ENCODE measurements at regions of chrX and their contacts with region 1.

Region 1: GRCh38 chrX:10636337-10636736 is 16.0 kb upstream of the MID1 start:
- DNase-seq: no peak
- ATAC-seq: peak; percentile 55; the same call in 1 of the 2 replicates
- H3K4me3 ChIP-seq: no peak overlapping the region
- H3K27ac ChIP-seq: peak overlapping the region; percentile 72
- H3K4me1 ChIP-seq: no peaks in the 10 kb centered on the region; the same call in 1 of the 2 replicates
- H3K27me3 ChIP-seq: no peaks in the 10 kb centered on the region
- CTCF ChIP-seq: peak; percentile 81

Region 2: DNA sequence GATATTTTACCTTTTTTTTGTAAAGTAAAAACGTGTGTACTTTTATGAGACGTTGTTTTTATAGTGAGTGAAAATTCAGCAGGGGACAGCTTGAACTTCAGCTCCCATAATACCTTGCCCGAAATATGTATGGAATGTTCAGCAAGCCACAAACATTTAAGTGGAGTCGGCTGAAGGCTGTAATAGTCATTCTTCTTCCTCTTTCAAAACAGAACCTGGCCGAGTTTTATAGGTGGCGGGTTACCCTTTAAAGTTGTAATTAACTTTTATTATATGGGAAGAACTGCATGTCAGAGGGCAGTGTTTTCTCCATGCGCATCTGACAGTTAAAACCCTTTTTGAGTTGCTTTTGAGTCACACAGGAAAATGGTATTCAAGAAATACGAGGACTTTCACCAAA is 618.5 kb before region 1 on chrX:
- CTCF ChIA-PET with region 1: no interaction called
- POLR2A ChIA-PET with region 1: no interaction called
- in situ Hi-C with region 1: no loop called
- intact Hi-C with region 1: no loop called
- DNase-seq: no peak
- ATAC-seq: 0 out of 2 replicates have a peak, but pooled peaks have one; percentile 31
- H3K4me3 ChIP-seq: peak overlapping the region; percentile 18 to 53; a peak in 2 of 4 replicates
- H3K27ac ChIP-seq: peak overlapping the region; percentile 68; the same call in 1 of the 2 replicates
- H3K4me1 ChIP-seq: no peaks in the 10 kb centered on the region; the same call in 1 of the 2 replicates
- H3K27me3 ChIP-seq: no peaks in the 10 kb centered on the region
- CTCF ChIP-seq: no peak

Region 3: DNA sequence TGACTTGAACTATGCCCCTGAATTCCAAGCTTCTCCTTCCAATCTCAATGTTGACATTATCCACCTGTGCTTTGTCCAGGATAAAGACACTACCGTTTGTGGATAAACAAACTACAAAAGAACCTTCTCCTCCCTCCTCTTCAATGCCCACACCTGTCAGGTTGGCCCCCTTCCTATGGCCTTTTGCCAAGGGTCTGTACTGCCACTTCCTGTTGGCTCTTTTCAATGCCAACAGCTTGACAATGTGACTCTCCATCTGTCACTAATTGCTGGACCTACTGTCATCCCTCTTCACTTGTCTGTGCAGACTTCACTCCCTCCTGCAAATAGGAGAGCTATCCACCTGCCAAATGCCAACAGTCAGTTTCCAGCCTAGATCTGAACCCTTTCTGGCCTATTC is 19.9 kb after region 1 on chrX:
- CTCF ChIA-PET with region 1: no interaction called
- POLR2A ChIA-PET with region 1: no interaction called
- in situ Hi-C with region 1: no loop called
- intact Hi-C with region 1: no loop called
- DNase-seq: no peak
- ATAC-seq: no peak
- H3K4me3 ChIP-seq: no peak overlapping the region
- H3K27ac ChIP-seq: no peak overlapping the region
- H3K4me1 ChIP-seq: no peaks in the 10 kb centered on the region
- H3K27me3 ChIP-seq: no peaks in the 10 kb centered on the region
- CTCF ChIP-seq: no peak

Region 4: GRCh38 chrX:11111038-11111851 is 474.9 kb after region 1 on chrX and contains the start of gene HCCS:
- CTCF ChIA-PET with region 1: no interaction called
- POLR2A ChIA-PET with region 1: no interaction called
- in situ Hi-C with region 1: no loop called
- intact Hi-C with region 1: loop called (anchors 10 kb)
- DNase-seq: no peak
- ATAC-seq: peak; percentile 99
- H3K4me3 ChIP-seq: peak within 1 kb of the TSS; percentile 67 to 77
- H3K27ac ChIP-seq: peak within 1 kb of the TSS; percentile 72
- H3K4me1 ChIP-seq: no peaks in the 10 kb centered on the region
- H3K27me3 ChIP-seq: no peaks in the 10 kb centered on the region
- CTCF ChIP-seq: no peak
- total RNA-seq, gene HCCS: 32.7 TPM